Activated B cell treated with CpG ODN at 0.5 μM for 24 hours (primary cell): ENCODE measurements at regions of chr12 and their contacts with region 1.

Region 1: GRCh38 chr12:93098077-93098476 is 169.0 kb upstream of the EEA1 start:
- DNase-seq: peak; percentile 23
- ATAC-seq: peak; percentile 98
- H3K4me3 Mint-ChIP-seq: no peak overlapping the region
- H3K27ac Mint-ChIP-seq: peak overlapping the region; percentile 46
- H3K4me1 Mint-ChIP-seq: peaks cover 18% of the 10 kb centered on the region
- H3K27me3 Mint-ChIP-seq: no peaks in the 10 kb centered on the region
- CTCF ChIP-seq: peak; percentile 34

Region 2: DNA sequence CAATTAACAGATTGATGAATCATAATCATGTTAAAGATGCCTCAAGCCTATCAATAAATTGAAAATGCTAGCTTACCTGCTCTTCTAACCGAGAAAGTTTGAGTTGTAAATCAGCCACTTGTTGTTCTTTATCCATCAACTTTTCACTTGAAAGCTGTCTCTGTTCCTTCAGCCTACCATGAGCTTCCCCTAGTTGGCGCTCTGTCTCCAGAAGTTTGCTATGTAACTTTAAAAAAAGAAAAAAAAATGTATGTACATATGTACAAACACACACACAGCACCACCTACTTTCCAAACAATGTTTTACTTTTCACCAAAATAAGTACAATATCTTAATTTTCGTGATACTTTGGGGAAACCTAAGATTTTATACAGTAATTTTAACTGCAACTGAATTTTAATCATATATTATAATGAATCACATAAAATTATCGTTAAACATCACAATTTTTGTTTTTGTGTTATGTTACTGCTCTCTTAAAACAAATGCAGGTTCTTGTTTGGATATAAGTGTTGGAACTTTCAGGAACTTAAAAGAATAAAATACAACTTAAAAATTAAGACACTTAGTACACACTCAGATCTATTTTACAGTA is 270.1 kb before region 1 on chr12:
- CTCF ChIA-PET with region 1: no interaction called
- POLR2A ChIA-PET with region 1: no interaction called
- intact Hi-C with region 1: loop called (anchors 1 kb)
- DNase-seq: no peak
- ATAC-seq: no peak
- H3K4me3 Mint-ChIP-seq: no peak overlapping the region
- H3K27ac Mint-ChIP-seq: no peak overlapping the region
- H3K4me1 Mint-ChIP-seq: no peaks in the 10 kb centered on the region
- H3K27me3 Mint-ChIP-seq: no peaks in the 10 kb centered on the region
- CTCF ChIP-seq: no peak

Region 3: DNA sequence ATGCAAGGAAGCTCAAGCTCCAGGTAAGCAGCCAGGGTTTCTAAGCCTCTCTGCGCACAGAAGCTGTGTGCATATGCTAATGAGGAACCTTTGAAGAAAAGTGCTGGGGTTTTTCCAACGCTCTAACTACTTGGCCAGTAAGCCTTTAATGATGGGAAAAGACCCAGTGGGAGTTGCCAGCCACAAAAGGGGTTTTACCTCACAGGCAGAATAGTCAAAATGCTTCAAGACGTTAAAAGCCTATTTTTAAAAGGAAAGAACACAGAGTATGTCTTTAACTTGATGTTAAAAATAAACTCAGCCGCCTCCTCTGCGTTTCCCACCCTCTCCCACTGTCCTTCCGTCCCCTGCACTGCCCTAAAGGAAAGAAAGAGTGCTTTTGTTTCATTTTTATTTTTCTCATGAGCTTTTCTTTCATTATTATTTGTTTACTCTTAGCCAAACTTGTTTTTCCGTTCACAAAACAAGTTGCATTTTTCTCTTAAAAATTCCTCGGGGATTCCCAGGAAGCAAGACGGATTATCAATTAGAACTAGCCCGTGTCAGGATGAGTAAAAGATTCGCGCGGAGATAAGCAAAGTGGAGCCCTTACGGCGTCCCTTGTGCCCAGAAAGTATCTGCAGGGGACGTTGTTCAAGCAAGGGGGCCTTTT is 69.9 kb after region 1 on chr12:
- CTCF ChIA-PET with region 1: interaction called, 8 read pairs
- POLR2A ChIA-PET with region 1: no interaction called
- intact Hi-C with region 1: loop called (anchors 1 kb)
- DNase-seq: no peak
- ATAC-seq: peak; percentile 80
- H3K4me3 Mint-ChIP-seq: peak overlapping the region; percentile 80
- H3K27ac Mint-ChIP-seq: peak overlapping the region; percentile 80
- H3K4me1 Mint-ChIP-seq: peaks cover 60% of the 10 kb centered on the region
- H3K27me3 Mint-ChIP-seq: no peaks in the 10 kb centered on the region
- CTCF ChIP-seq: no peak

Region 4: GRCh38 chr12:93243689-93244513 is 145.8 kb after region 1 on chr12:
- CTCF ChIA-PET with region 1: interaction called, 3 read pairs
- POLR2A ChIA-PET with region 1: no interaction called
- intact Hi-C with region 1: loop called (anchors 5 kb)
- DNase-seq: no peak
- ATAC-seq: peak; percentile 18
- H3K4me3 Mint-ChIP-seq: peak overlapping the region; percentile 15
- H3K27ac Mint-ChIP-seq: no peak overlapping the region
- H3K4me1 Mint-ChIP-seq: peaks cover 36% of the 10 kb centered on the region
- H3K27me3 Mint-ChIP-seq: no peaks in the 10 kb centered on the region
- CTCF ChIP-seq: no peak

Region 5: GRCh38 chr12:93397412-93397811 is 299.3 kb after region 1 on chr12:
- CTCF ChIA-PET with region 1: interaction called, 37 read pairs
- POLR2A ChIA-PET with region 1: interaction called, 14 read pairs
- intact Hi-C with region 1: loop called (anchors 2 kb)
- DNase-seq: no peak
- ATAC-seq: no peak
- H3K4me3 Mint-ChIP-seq: no peak overlapping the region
- H3K27ac Mint-ChIP-seq: no peak overlapping the region
- H3K4me1 Mint-ChIP-seq: peaks cover 11% of the 10 kb centered on the region
- H3K27me3 Mint-ChIP-seq: no peaks in the 10 kb centered on the region
- CTCF ChIP-seq: no peak

Region 6: DNA sequence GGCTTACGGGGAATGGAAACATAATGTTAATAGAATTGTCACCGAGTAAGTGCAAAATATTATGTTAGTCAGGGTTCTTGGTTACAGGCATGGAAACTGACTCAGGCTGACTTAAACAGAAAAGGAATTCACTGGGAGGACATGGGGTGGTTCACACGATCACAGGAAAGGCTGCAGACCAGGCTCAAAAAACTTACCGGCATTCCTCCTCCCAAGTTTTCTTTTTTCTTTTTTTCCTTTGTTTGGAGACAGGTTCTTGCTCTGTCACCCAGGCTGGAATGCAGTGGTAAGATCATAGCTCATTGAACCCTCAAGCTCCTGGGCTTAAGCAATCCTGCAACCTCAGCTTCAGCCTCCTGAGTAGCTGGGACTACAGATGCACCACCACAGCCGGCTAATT is 355.6 kb after region 1 on chr12:
- CTCF ChIA-PET with region 1: no interaction called
- POLR2A ChIA-PET with region 1: no interaction called
- intact Hi-C with region 1: no loop called
- DNase-seq: no peak
- ATAC-seq: no peak
- H3K4me3 Mint-ChIP-seq: no peak overlapping the region
- H3K27ac Mint-ChIP-seq: no peak overlapping the region
- H3K4me1 Mint-ChIP-seq: peaks cover 15% of the 10 kb centered on the region
- H3K27me3 Mint-ChIP-seq: no peaks in the 10 kb centered on the region
- CTCF ChIP-seq: no peak

Region 7: GRCh38 chr12:93467351-93468007 is 369.4 kb after region 1 on chr12 and contains the start of gene MRPL42:
- CTCF ChIA-PET with region 1: no interaction called
- POLR2A ChIA-PET with region 1: no interaction called
- intact Hi-C with region 1: loop called (anchors 1 kb)
- DNase-seq: peak; percentile 93
- ATAC-seq: peak; percentile 92
- H3K4me3 Mint-ChIP-seq: peak within 1 kb of the TSS; percentile 95
- H3K27ac Mint-ChIP-seq: peak within 1 kb of the TSS; percentile 94
- H3K4me1 Mint-ChIP-seq: peaks cover 23% of the 10 kb centered on the region
- H3K27me3 Mint-ChIP-seq: no peaks in the 10 kb centered on the region
- CTCF ChIP-seq: no peak
- total RNA-seq, gene MRPL42: 40.9 and 44.6 TPM in 2 replicates

Region 8: GRCh38 chr12:94230357-94230905 is 1132.4 kb after region 1 on chr12:
- CTCF ChIA-PET with region 1: no interaction called
- POLR2A ChIA-PET with region 1: no interaction called
- intact Hi-C with region 1: no loop called
- DNase-seq: no peak
- ATAC-seq: peak; percentile 34
- H3K4me3 Mint-ChIP-seq: no peak overlapping the region
- H3K27ac Mint-ChIP-seq: no peak overlapping the region
- H3K4me1 Mint-ChIP-seq: peaks cover 47% of the 10 kb centered on the region
- H3K27me3 Mint-ChIP-seq: no peaks in the 10 kb centered on the region
- CTCF ChIP-seq: no peak